HEK293 (cell line): ENCODE measurements at regions of chr3 and their contacts with region 1.

Region 1: DNA sequence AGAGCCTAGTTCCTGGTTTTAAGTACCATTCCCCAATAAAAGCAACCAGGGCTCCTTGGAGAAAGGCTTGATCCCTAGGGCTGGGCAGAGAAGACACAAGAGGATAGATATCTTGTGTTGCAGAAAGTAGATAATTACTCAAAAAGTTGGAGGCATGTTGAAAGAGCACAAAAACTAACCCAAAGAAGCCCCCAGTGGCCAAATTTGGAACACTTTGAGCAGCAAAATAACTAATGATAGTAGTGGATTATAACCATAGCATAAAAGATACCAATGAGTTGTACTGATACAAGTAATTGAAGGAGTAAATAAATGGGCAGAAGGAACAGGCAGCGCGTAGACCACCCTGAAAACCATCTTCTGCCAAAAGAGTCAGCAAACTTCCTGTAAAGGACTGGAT is 12.0 kb downstream of the EXOSC7 start:
- H3K4me3 ChIP-seq: no peak overlapping the region
- H3K27ac ChIP-seq: no peak overlapping the region
- H3K4me1 ChIP-seq: peaks cover 2% of the 10 kb centered on the region
- CTCF ChIP-seq: no peak

Region 2: GRCh38 chr3:44772099-44772442 is 216.0 kb before region 1 on chr3:
- CTCF ChIA-PET with region 1: no interaction called
- POLR2A ChIA-PET with region 1: no interaction called
- H3K4me3 ChIP-seq: no peak overlapping the region
- H3K27ac ChIP-seq: no peak overlapping the region
- H3K4me1 ChIP-seq: no peaks in the 10 kb centered on the region
- CTCF ChIP-seq: no peak

Region 3: GRCh38 chr3:44942202-44942921 is 45.7 kb before region 1 on chr3:
- CTCF ChIA-PET with region 1: no interaction called
- POLR2A ChIA-PET with region 1: no interaction called
- H3K4me3 ChIP-seq: no peak overlapping the region
- H3K27ac ChIP-seq: no peak overlapping the region
- H3K4me1 ChIP-seq: no peaks in the 10 kb centered on the region
- CTCF ChIP-seq: no peak

Region 4: DNA sequence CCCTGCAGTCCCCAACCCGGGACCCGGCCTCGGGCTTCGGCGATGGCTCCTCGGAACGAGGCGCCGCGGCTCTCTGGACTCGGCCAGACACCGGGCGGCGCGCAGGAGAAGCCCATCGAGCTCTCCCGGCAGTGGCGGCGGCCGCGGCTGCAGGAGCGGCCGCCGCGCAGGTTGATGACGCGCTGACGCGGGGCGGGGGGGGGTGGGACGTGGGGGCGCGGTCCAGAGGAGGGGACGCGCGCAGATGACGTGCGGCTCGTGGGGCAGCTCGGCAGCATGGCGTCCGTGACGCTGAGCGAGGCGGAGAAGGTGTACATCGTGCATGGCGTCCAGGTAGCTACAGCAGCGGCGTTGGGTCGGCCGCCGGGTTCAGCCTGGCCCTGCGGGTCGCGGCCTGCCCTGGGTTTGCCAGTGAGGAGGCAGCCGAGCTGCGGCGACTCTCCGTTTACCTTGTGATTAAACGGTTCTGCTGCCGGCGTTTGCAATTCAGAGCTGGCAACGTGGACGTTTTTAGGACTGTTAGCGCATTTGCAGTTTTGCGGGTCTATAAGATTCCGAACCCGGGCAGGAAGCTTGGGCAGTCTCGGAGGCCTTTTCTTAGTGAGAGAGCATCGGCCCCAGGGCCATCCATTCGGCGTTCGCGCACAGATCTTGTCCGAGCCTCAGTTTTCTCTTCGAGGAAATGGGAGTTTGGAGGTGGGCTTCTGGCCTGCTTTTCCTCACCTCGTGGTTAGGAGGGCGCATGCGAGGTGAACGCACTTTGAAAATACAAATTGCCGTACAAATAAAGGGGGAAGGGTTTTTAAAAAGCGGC is 11.9 kb before region 1 on chr3 and contains the starts of genes EXOSC7 and ZDHHC3:
- CTCF ChIA-PET with region 1: interaction called, 12 read pairs
- POLR2A ChIA-PET with region 1: interaction called, 3 read pairs
- H3K4me3 ChIP-seq: peak within 1 kb of the TSS; percentile 96
- H3K27ac ChIP-seq: peak within 1 kb of the TSS; percentile 50
- H3K4me1 ChIP-seq: no peaks in the 10 kb centered on the region
- CTCF ChIP-seq: no peak